Naive thymus-derived CD8-positive, alpha-beta T cell (primary cell): ENCODE measurements at regions of chr12 and their contacts with region 1.

Region 1: GRCh38 chr12:132866251-132866828 is 21.1 kb downstream of the CHFR start:
- DNase-seq: no peak
- ATAC-seq: no peak
- H3K4me3 Mint-ChIP-seq: peak overlapping the region in 7 of 10 donors; percentile 20 to 77 (median 70)
- H3K27ac Mint-ChIP-seq: peak overlapping the region; percentile 65 to 98 (median 94)
- H3K4me1 Mint-ChIP-seq: peaks cover 12 to 39% (median 19%) of the 10 kb centered on the region in 4 donors
- H3K27me3 Mint-ChIP-seq: no peaks in the 10 kb centered on the region

Region 2: GRCh38 chr12:132837693-132838409 is 28.5 kb before region 1 on chr12:
- POLR2A ChIA-PET with region 1: interaction called, 12 read pairs
- DNase-seq: no peak
- ATAC-seq: peak in 1 of 2 donors; percentile 3
- H3K4me3 Mint-ChIP-seq: peak overlapping the region; percentile 7 to 89 (median 85)
- H3K27ac Mint-ChIP-seq: peak overlapping the region in 9 of 10 donors; percentile 65 to 95 (median 94)
- H3K4me1 Mint-ChIP-seq: peaks cover 32 to 58% (median 43%) of the 10 kb centered on the region in 4 donors
- H3K27me3 Mint-ChIP-seq: no peaks in the 10 kb centered on the region

Region 3: GRCh38 chr12:132847363-132848356 is 18.7 kb before region 1 on chr12:
- POLR2A ChIA-PET with region 1: interaction called, 20 read pairs
- DNase-seq: peak; percentile 16 to 82 (median 60)
- ATAC-seq: peak; percentile 96 to 99
- H3K4me3 Mint-ChIP-seq: peak overlapping the region; percentile 32 to 81 (median 70)
- H3K27ac Mint-ChIP-seq: peak overlapping the region; percentile 86 to 97 (median 94)
- H3K4me1 Mint-ChIP-seq: peaks cover 10 to 32% (median 21%) of the 10 kb centered on the region in 4 donors
- H3K27me3 Mint-ChIP-seq: no peaks in the 10 kb centered on the region